IMR-90 (cell line): ENCODE measurements at regions of chr20 and their contacts with region 1.

Region 1: DNA sequence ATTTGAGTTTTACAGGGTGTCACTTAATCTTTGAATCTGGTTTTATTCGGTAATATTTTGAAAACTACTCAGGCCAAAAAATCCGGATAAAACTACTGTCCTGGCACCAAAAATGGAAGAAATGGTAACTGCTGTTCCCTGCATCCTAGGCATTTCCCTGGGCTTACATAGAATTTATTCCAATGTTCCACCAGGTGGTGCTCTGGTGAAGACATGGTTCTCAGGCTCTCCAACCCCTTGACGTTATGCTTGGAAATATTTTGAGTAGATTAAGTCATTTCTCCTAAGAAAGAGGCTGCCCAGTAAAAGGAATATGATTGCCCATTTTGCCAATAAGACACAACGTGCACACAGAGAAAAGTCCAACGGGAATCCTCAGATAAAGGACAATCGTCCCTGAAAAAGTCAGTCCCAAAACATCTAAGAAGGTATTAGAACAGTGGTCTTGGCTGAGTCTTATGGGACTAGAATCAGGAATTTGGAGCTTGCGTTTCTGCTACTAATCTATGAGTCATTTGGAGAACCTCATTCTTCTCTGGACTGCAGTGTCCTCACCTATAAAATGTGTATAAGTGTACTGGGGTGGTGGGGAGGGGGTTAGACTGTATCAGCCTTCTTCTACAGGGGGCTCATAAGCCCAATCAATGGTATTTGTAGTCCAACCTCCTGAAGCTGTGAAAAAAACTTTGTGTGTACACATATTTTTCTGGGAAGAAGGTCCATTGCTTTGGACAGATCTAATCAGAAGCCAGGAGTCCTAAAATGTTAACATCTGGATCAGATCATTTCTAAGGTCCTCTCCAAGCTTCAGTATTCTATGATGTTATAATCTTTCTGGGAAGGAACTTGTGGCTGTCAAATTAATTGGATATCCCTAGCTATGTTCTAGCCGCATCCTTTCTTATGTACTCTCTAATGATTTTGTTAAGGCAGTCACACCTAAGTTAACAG is 131.0 kb upstream of the BMP2 start:
- DNase-seq: peak; percentile 69
- ATAC-seq: peak; percentile 87
- H3K4me3 ChIP-seq: no peak overlapping the region
- H3K27ac ChIP-seq: no peak overlapping the region
- H3K4me1 ChIP-seq: no peaks in the 10 kb centered on the region
- H3K27me3 ChIP-seq: peaks cover 8% of the 10 kb centered on the region
- CTCF ChIP-seq: peak; percentile 66
- POLR2A ChIP-seq: no peak
- RAD21 ChIP-seq: peak; percentile 64

Region 2: GRCh38 chr20:6566821-6567220 is 69.7 kb before region 1 on chr20:
- CTCF ChIA-PET with region 1: no interaction called
- POLR2A ChIA-PET with region 1: no interaction called
- dilution Hi-C with region 1: no loop called
- in situ Hi-C with region 1: no loop called
- intact Hi-C with region 1: no loop called
- DNase-seq: peak; percentile 96
- ATAC-seq: peak; percentile 83
- H3K4me3 ChIP-seq: no peak overlapping the region
- H3K27ac ChIP-seq: no peak overlapping the region
- H3K4me1 ChIP-seq: peaks cover 3% of the 10 kb centered on the region; the same call in 1 of the 2 replicates
- H3K27me3 ChIP-seq: no peaks in the 10 kb centered on the region
- CTCF ChIP-seq: no peak
- POLR2A ChIP-seq: no peak
- RAD21 ChIP-seq: no peak; the same call in 1 of the 2 replicates

Region 3: DNA sequence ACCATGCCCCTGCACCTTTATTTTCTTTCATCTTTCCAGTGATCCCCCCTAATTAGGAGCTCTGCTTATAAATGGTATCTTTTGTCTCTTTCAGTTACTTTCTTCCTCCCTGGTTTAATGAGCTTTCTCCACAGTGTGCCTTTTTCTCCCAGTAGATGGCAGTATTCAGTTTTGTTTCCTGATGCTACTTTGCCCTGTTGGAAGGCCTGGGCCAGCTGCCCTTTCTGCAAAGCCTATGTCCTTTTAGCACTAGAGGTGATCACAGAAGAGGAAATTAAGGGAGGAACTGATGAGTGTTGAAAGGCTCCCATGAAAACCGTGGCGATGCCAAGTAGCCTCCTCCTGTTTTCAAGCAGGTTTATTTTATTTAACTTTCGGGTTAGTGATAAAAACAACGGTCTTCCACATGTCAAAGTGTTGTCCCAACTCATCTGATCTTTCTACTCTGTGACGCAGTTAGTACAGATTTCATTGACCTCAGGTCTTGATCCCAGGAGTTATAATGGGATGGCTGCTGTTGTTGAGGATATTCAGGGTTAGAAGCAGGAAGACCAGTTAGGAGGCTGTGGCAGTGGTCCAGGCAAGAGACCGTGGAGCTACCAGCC is 53.2 kb before region 1 on chr20:
- CTCF ChIA-PET with region 1: no interaction called
- POLR2A ChIA-PET with region 1: no interaction called
- dilution Hi-C with region 1: no loop called
- in situ Hi-C with region 1: no loop called
- intact Hi-C with region 1: loop called (anchors 1 kb)
- DNase-seq: peak; percentile 55
- ATAC-seq: peak; percentile 93
- H3K4me3 ChIP-seq: no peak overlapping the region
- H3K27ac ChIP-seq: no peak overlapping the region
- H3K4me1 ChIP-seq: peaks cover 6% of the 10 kb centered on the region
- H3K27me3 ChIP-seq: no peaks in the 10 kb centered on the region
- CTCF ChIP-seq: peak; percentile 71
- POLR2A ChIP-seq: no peak
- RAD21 ChIP-seq: peak; percentile 68